ENCODE measurements at regions of chr4 and their contacts with region 1.

Region 1: DNA sequence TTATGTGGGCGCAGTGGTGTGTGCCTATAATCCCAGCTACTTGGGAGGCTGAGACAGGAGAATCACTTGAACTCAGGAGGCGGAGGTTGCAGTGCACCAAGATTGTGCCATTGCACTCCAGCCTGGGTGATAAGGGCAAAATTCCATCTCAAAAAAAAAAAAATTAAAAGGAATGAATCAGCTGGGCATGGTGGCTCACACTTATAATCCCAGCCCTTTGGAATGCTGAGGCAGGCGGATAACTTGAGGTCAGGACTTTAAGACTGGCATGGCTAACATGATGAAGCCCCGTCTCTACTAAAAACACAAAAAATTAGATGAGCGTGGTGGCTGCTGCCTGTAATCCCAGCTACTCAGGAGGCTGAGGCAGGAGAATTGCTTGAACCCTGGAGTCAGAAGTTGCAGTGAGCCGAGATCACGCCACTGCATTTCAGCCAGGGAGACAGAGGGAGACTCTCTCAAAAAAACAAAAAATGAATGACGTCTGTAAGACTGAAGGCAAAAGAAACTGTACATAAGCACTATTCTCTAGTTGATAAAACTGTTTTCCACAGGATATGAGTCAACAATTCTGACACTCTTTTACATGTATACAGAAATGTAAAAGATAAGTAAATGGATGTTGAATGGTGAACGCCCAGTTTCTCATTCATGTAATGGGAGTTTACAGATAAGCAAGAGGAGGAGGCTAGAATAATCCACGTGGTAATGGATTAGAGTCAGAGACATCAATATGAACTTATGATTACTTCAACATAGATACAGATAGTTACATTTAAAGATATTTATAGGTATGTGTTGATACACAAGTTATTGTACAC is 22.2 kb downstream of the CENPC start:
- DNase-seq: no peak
- H3K4me3 Mint-ChIP-seq: peak overlapping the region; percentile 19
- H3K27ac Mint-ChIP-seq: peak overlapping the region; percentile 92
- H3K4me1 Mint-ChIP-seq: peaks cover 65% of the 10 kb centered on the region
- H3K27me3 Mint-ChIP-seq: no peaks in the 10 kb centered on the region

Region 2: GRCh38 chr4:67658302-67658701 is 135.2 kb after region 1 on chr4:
- intact Hi-C with region 1: loop called (anchors 1 kb)
- DNase-seq: no peak
- H3K4me3 Mint-ChIP-seq: no peak overlapping the region
- H3K27ac Mint-ChIP-seq: no peak overlapping the region
- H3K4me1 Mint-ChIP-seq: peaks cover 12% of the 10 kb centered on the region
- H3K27me3 Mint-ChIP-seq: no peaks in the 10 kb centered on the region

Region 3: DNA sequence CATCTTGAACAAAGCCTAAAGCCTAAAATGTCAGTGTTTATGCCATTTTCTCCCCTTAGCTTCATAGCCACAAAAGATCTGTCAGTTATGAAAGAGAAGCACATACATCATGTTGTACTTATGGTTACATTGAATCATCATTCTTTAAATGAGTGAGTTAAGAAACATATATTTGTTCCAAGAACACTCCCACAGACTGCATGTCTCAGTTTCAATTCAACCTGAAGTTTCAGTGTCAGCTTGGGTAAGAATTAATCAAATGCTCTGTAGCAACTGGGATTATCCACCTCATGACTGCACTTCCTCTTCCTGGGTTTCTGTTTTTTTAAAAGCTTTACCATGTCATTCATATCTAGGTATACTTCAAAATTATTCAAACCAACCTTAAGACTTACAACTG is 726.4 kb after region 1 on chr4:
- intact Hi-C with region 1: loop called (anchors 2 kb)
- DNase-seq: no peak
- H3K4me3 Mint-ChIP-seq: peak overlapping the region; percentile 23
- H3K27ac Mint-ChIP-seq: peak overlapping the region; percentile 87
- H3K4me1 Mint-ChIP-seq: peaks cover 13% of the 10 kb centered on the region
- H3K27me3 Mint-ChIP-seq: no peaks in the 10 kb centered on the region